Endothelial cell of umbilical vein (primary cell): ENCODE measurements at regions of chr17 and their contacts with region 1.

Region 1: GRCh38 chr17:82518826-82519810 is at the start of gene FOXK2:
- DNase-seq: peak; percentile 93
- H3K4me3 ChIP-seq: peak within 1 kb of the TSS; percentile 81 to 93 (median 88)
- H3K27ac ChIP-seq: peak within 1 kb of the TSS; percentile 82
- H3K4me1 ChIP-seq: peaks cover 2% of the 10 kb centered on the region
- H3K27me3 ChIP-seq: no peaks in the 10 kb centered on the region
- CTCF ChIP-seq: no peak
- POLR2A ChIP-seq: peak; percentile 78
- total RNA-seq, gene FOXK2: 75.1 and 79.3 TPM in 2 replicates

Region 2: DNA sequence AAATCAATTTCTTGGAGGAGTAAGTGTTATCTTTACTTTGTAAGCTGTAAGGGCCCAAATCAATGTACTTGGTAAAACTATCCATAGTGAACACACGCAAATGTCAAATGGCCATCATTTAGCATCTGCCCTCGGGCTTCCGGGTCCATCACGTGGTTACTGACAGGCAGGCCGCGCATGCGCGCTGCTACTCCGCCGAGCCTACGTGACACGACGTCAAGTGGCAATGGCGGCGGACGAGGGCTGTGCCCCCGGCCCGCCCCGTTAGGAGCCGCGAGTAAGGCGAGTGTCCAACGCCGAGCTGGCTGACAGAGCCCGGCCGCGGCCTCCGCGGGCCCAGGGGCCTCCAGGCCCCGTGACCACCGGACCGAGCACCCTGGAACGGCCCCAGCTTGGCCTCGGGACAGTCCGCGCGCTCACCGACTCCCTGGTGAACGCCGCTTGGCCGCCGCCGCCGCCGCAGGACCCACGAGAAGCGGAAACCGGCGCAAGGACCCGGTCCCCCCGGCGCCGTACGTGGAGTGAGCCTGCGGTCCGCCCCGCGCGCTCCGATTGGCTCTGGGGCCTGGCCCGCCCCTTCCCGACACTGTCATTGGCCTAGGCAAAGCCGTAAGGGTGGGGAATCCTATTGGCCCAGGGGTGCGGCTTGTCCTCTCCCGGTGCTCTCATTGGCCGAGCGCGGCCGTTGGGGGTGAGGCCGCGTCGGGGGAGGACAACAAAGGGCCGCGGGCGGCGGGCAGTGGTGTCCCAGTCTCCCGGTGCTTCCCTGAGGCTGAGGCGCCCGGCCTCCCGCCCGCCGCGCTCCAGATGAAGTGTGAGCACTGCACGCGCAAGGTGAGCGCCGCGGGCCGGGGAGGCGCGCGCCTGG is 60.9 kb before region 1 on chr17 and contains the start of gene NARF:
- CTCF ChIA-PET with region 1: no interaction called
- POLR2A ChIA-PET with region 1: no interaction called
- dilution Hi-C with region 1: no loop called
- intact Hi-C with region 1: loop called (anchors 2 kb)
- DNase-seq: peak; percentile 98
- H3K4me3 ChIP-seq: peak within 1 kb of the TSS; percentile 30 to 65 (median 57)
- H3K27ac ChIP-seq: peak within 1 kb of the TSS; percentile 96
- H3K4me1 ChIP-seq: peaks cover 11% of the 10 kb centered on the region
- H3K27me3 ChIP-seq: no peaks in the 10 kb centered on the region
- CTCF ChIP-seq: no peak
- POLR2A ChIP-seq: peak; percentile 85
- total RNA-seq, gene NARF: 83.4 and 85.6 TPM in 2 replicates

Region 3: GRCh38 chr17:82536512-82537201 is 17.5 kb after region 1 on chr17:
- CTCF ChIA-PET with region 1: interaction called, 18 read pairs
- POLR2A ChIA-PET with region 1: no interaction called
- dilution Hi-C with region 1: no loop called
- intact Hi-C with region 1: loop called (anchors 2 kb)
- DNase-seq: no peak
- H3K4me3 ChIP-seq: peak overlapping the region in 1 of 3 experiments; percentile 44
- H3K27ac ChIP-seq: peak overlapping the region; percentile 98
- H3K4me1 ChIP-seq: peaks cover 35% of the 10 kb centered on the region
- H3K27me3 ChIP-seq: no peaks in the 10 kb centered on the region
- CTCF ChIP-seq: no peak
- POLR2A ChIP-seq: no peak

Region 4: GRCh38 chr17:82603981-82604448 is 84.9 kb after region 1 on chr17:
- CTCF ChIA-PET with region 1: no interaction called
- POLR2A ChIA-PET with region 1: no interaction called
- dilution Hi-C with region 1: no loop called
- intact Hi-C with region 1: no loop called
- DNase-seq: peak; percentile 36
- H3K4me3 ChIP-seq: no peak overlapping the region
- H3K27ac ChIP-seq: no peak overlapping the region
- H3K4me1 ChIP-seq: peaks cover 27% of the 10 kb centered on the region
- H3K27me3 ChIP-seq: no peaks in the 10 kb centered on the region
- CTCF ChIP-seq: no peak
- POLR2A ChIP-seq: no peak